ENCODE measurements at regions of chr9 and their contacts with region 1.

Region 1: DNA sequence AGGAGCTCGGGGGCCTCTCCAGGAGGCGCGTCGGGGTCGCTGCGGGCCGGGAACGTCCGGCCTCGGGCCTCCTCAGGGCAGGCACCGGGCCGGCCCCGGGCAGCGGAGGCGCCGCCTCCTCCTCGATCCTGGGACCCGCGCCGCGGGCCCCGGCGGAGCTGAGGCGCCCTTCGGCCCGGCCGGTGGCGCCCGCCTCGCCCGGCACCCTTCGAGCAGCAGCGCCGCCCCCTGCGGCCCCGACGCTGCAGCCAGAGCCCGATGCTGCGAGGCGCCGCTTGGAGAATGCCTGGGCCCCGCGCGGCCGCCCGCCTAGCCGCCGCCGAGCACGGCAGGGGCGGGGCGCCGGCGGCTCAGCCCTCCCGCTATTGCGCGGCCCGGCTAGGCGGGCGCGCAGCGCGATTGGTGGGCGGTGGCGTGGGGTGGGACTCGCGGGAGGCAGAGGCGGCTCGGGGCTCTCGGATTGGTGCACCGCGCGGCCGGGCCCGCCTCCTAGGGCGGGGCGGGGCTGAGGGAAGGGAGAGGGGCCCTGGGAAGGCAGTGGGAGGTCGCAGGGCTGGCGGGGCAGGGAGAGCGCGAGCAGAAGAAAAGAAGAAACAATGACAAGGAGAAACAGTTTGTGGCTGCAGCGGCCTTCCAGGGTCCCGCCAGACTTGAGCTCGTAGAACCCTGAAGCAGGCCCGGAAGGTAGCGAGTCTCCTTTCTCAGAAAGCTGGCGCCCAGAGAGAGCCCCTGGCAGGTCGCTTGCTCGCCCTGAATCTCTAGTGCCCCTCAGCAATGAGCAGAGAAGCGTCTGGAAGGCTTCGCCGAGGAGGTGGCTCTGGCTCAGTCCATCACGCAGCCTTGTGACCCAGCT is at the start of gene EEIG1:
- DNase-seq: peak; percentile 98 to 99
- ATAC-seq: peak; percentile 97
- H3K4me3 ChIP-seq: peak within 1 kb of the TSS; percentile 27 to 87
- H3K27ac ChIP-seq: peak within 1 kb of the TSS; percentile 1 to 93
- H3K4me1 ChIP-seq: peaks cover 0 to 2% of the 10 kb centered on the region in 2 donors
- H3K27me3 ChIP-seq: no peaks in the 10 kb centered on the region
- total RNA-seq, gene EEIG1: 41.4 to 63.1 TPM

Region 2: DNA sequence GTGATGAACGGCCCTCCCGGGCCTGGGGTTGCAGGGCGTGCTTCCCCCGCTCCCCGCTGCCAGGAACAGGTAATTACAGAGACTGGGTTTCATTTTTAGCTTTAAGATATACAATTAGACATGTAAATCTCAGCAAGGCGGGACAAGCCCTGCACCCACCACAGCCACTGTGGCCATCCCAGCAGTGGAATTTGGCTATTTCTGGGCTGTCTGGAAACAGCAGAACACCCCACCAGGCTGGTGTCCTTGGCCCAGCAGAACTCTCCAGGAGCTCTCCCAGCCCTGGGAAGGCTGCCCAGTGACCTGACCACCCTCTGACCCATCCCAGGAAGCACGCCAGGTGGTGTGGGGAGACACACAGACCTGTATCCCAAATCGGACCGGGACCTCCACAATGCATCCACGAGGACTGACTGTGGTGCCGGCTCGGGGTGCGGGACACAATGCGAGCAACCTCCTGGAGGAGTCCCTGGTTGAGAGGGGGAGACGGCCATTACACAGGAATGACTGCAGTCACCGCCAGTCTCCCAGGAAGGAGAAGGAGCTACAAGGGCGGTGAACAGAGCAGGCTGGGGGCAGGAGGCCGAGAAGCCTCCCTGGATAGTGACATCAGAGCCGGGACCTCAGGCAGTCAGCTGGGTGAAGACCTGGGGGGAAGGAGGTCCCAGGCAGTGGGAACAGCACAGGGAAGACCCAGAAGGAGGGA is 17.4 kb before region 1 on chr9:
- intact Hi-C with region 1: loop called in 1 of 2 experiments (anchors 2 kb)
- DNase-seq: no peak
- ATAC-seq: peak; percentile 8
- H3K4me3 ChIP-seq: no peak overlapping the region
- H3K27ac ChIP-seq: peak overlapping the region in 1 of 2 donors; percentile 53
- H3K4me1 ChIP-seq: peaks cover 0 to 4% of the 10 kb centered on the region in 2 donors
- H3K27me3 ChIP-seq: no peaks in the 10 kb centered on the region